Activated CD4-positive, alpha-beta memory T cell treated with anti-CD3 and anti-CD28 coated beads for 36 hours (primary cell): ENCODE measurements at regions of chr19 and their contacts with region 1.

Region 1: GRCh38 chr19:1383311-1384084 is at the start of gene NDUFS7:
- DNase-seq: peak; percentile 95
- H3K4me3 Mint-ChIP-seq: peak within 1 kb of the TSS; percentile 80
- H3K27ac Mint-ChIP-seq: peak within 1 kb of the TSS; percentile 97
- H3K4me1 Mint-ChIP-seq: peaks cover 23% of the 10 kb centered on the region
- H3K27me3 Mint-ChIP-seq: peaks cover 4% of the 10 kb centered on the region
- total RNA-seq, gene NDUFS7: 117 to 119 TPM

Region 2: GRCh38 chr19:1249298-1249989 is 134.1 kb before region 1 on chr19:
- CTCF ChIA-PET with region 1: interaction called, 6 read pairs
- POLR2A ChIA-PET with region 1: no interaction called
- intact Hi-C with region 1: loop called (anchors 1 kb)
- DNase-seq: peak; percentile 97
- H3K4me3 Mint-ChIP-seq: peak overlapping the region; percentile 71
- H3K27ac Mint-ChIP-seq: peak overlapping the region; percentile 82
- H3K4me1 Mint-ChIP-seq: peaks cover 12% of the 10 kb centered on the region
- H3K27me3 Mint-ChIP-seq: no peaks in the 10 kb centered on the region

Region 3: DNA sequence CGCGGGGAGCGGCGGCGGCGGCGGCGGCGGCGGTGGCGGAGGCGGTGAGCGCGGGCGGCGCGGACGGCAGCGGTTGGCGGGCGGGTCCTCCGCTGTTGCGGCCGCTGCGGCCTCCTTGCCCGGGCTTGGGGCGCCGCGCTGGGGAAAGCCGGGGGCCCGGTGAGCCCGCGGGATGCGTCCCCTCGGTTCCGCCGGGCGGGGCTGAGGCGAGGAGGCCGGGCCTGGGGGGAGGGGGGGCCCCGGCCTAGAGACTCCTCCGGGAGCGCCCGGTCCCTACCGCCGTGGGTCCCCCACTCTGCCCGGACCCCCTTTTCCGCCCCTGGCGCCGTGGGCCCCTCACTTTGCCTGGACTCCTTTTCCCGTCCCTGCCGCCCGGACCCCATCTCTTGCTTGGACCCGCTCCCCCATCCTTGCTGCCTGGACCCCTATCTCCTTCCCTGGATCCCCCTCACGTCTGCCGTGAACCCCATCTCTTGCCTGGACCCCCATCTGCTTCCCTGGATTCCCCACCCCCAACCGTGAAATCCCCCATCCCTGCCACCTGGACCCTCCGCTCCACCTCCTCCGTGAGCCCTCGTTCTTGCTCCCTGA is 28.4 kb before region 1 on chr19:
- CTCF ChIA-PET with region 1: no interaction called
- POLR2A ChIA-PET with region 1: interaction called, 5 read pairs
- intact Hi-C with region 1: loop called (anchors 1 kb)
- DNase-seq: no peak
- H3K4me3 Mint-ChIP-seq: peak overlapping the region; percentile 85
- H3K27ac Mint-ChIP-seq: peak overlapping the region; percentile 53
- H3K4me1 Mint-ChIP-seq: peaks cover 16% of the 10 kb centered on the region
- H3K27me3 Mint-ChIP-seq: no peaks in the 10 kb centered on the region

Region 4: DNA sequence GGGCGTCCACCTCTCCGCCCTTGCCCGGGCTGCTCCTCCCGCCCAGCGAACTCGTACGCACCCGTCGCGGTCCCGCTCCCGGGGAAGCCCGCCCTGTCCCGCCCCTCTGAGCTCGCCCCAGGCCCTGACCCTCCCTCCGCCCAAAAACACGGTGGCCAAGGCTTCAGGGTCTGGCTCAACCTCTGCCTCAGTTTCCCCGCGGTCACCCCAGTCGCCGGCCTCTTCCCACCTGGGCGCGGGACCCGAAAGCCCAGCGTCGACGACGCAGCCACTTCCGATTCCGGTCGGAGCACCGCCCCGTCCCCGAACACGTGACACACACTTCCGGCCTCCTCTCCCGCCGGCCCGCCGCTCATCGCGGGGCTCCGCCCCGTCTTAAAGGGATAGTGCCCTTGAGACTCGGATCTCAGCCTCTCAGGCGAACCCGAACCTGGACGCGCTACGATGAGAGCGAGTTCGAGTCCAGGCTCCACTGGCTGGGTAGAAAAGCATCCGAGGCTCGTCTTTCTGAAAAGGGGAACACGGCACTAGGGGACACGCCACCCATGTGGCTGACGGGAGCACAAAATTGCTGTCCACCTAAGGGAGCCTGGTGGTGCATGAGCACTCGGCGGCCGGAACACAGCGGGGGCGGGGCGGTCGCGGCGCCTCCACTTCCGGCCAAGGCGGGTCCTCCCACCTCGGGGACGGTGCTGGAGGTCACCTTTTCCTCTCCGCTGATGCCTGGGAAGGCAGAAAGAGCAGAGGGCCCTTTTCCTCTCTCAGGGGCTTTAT is 95.6 kb after region 1 on chr19 and contains the start of gene C19orf25:
- CTCF ChIA-PET with region 1: no interaction called
- POLR2A ChIA-PET with region 1: no interaction called
- intact Hi-C with region 1: loop called (anchors 1 kb)
- DNase-seq: peak; percentile 96
- H3K4me3 Mint-ChIP-seq: peak within 1 kb of the TSS; percentile 97
- H3K27ac Mint-ChIP-seq: peak within 1 kb of the TSS; percentile 91
- H3K4me1 Mint-ChIP-seq: peaks cover 9% of the 10 kb centered on the region
- H3K27me3 Mint-ChIP-seq: no peaks in the 10 kb centered on the region
- total RNA-seq, gene C19orf25: 24.4 to 26.9 TPM

Region 5: GRCh38 chr19:1551068-1552040 is 167.9 kb after region 1 on chr19:
- CTCF ChIA-PET with region 1: no interaction called
- POLR2A ChIA-PET with region 1: no interaction called
- intact Hi-C with region 1: no loop called
- DNase-seq: no peak
- H3K4me3 Mint-ChIP-seq: no peak overlapping the region
- H3K27ac Mint-ChIP-seq: no peak overlapping the region
- H3K4me1 Mint-ChIP-seq: peaks cover under 1% of the 10 kb centered on the region
- H3K27me3 Mint-ChIP-seq: peaks cover 14% of the 10 kb centered on the region